Mammary epithelial cell (primary cell): ENCODE measurements at regions of chr12 and their contacts with region 1.

Region 1: GRCh38 chr12:56189176-56189917 is at the start of gene SMARCC2:
- DNase-seq: peak; percentile 75
- H3K4me3 ChIP-seq: peak within 1 kb of the TSS; percentile 69 to 88 (median 71)
- H3K27ac ChIP-seq: peak within 1 kb of the TSS; percentile 56
- H3K4me1 ChIP-seq: peaks cover 18% of the 10 kb centered on the region
- H3K27me3 ChIP-seq: no peaks in the 10 kb centered on the region
- CTCF ChIP-seq: peak; percentile 52 to 71
- total RNA-seq, gene SMARCC2: 28.7 to 61.6 TPM

Region 2: DNA sequence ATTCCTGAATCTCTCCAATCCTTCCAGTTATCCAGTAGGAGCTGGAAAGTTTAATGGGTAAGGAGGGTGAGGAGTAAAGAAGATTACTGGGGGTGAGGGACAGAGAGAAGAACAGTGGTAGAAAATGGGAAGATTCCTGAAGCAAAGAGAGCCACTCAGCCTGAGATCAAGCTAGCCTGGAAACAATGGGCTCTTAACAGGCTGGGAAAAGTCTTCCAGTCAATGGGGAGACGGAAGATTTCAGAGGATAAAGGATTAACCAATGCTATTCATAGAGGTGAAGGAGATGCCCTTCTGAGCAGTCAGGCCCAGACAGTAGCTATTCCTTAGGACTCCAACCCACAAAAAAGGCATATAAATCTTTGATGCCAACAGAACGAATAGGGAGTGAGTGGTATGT is 431.6 kb before region 1 on chr12:
- CTCF ChIA-PET with region 1: no interaction called
- dilution Hi-C with region 1: loop called (anchors 5 kb)
- in situ Hi-C with region 1: no loop called
- intact Hi-C with region 1: no loop called
- DNase-seq: no peak
- H3K4me3 ChIP-seq: no peak overlapping the region
- H3K27ac ChIP-seq: no peak overlapping the region
- H3K4me1 ChIP-seq: no peaks in the 10 kb centered on the region
- H3K27me3 ChIP-seq: no peaks in the 10 kb centered on the region
- CTCF ChIP-seq: no peak

Region 3: DNA sequence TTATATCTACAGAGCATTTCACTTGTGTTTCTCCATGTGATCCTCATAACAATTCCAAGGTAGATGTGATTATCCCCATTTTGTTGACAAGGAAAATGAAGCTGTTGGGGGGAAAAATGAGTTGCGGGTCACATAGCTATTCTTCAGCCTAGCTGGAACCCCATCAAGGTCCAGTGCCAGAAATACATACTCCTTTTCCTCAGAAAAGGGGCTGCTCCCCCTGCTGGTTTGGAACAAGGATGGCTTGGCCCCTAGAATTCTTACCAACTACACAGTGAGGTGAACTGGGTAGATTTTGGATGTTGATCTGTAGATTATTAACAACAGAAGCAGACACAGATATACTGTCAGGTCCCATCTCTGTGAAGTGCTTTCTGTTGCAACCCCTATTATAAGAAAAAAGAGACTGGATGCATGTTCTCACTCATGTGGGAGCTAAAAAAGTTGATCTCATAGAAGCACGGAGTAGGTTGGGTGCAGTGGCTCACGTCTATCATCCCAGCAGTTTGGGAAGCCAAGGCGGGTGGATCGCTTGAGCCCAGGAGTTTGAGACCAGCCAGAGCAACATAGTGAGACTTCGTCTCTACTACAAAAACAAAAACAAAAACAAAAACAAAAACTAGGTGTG is 159.6 kb before region 1 on chr12:
- CTCF ChIA-PET with region 1: no interaction called
- dilution Hi-C with region 1: no loop called
- in situ Hi-C with region 1: no loop called
- intact Hi-C with region 1: no loop called
- DNase-seq: no peak
- H3K4me3 ChIP-seq: no peak overlapping the region
- H3K27ac ChIP-seq: no peak overlapping the region
- H3K4me1 ChIP-seq: peaks cover 13% of the 10 kb centered on the region
- H3K27me3 ChIP-seq: no peaks in the 10 kb centered on the region
- CTCF ChIP-seq: peak; percentile 76 to 87

Region 4: DNA sequence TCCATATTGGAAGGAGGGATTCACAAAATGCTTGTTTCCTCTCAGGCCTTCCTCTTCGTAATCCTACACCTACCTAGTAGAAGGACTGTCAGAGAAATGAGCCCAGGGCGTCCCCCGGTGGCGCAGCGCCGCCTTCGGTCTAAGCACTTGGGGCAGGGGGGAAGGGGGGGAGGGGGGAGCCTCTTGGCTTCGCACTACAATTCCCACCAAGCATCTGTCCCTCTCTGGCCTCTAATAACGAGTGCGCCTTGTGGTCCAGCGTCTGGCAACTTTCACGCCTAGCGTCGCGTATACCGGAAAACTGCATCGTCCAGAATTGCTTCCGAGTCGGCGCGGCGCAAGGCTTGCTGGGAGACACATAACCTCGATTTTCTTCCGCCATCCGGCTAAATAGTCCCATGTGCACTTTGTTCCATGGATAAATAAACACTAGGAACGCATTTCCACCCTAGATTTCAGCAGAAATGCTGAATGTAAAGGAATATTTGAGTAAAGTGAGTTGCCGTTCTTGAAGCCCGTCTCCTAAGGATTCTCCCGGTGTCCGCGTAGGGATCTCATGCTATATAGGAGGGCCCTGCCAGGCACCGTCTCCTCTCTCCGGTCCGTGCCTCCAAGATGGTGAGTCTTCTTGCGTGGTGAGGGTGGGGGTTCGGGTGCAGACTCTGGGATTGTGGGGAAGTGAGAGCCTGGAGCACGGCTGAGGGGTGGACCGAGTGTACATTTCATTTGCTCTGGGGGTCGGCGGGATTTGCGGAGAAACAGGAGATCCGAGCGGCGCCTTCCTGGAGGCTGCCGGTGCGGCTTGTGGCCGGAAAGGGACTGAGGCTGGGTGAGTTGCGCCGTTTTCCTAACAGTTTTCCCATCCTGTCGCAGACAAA is 147.6 kb before region 1 on chr12 and contains the start of gene RPS26:
- CTCF ChIA-PET with region 1: no interaction called
- dilution Hi-C with region 1: no loop called
- in situ Hi-C with region 1: no loop called
- intact Hi-C with region 1: loop called (anchors 2 kb)
- DNase-seq: peak; percentile 99
- H3K4me3 ChIP-seq: peak within 1 kb of the TSS; percentile 78 to 91 (median 86)
- H3K27ac ChIP-seq: peak within 1 kb of the TSS; percentile 91
- H3K4me1 ChIP-seq: peaks cover 19% of the 10 kb centered on the region
- H3K27me3 ChIP-seq: no peaks in the 10 kb centered on the region
- CTCF ChIP-seq: peak; percentile 16 to 54
- total RNA-seq, gene RPS26: 46.4 to 331 TPM

Region 5: GRCh38 chr12:56127888-56128669 is 61.3 kb before region 1 on chr12 and contains the start of gene ESYT1:
- CTCF ChIA-PET with region 1: interaction called, 6 read pairs
- dilution Hi-C with region 1: no loop called
- in situ Hi-C with region 1: no loop called
- intact Hi-C with region 1: loop called (anchors 1 kb)
- DNase-seq: peak; percentile 100
- H3K4me3 ChIP-seq: peak within 1 kb of the TSS; percentile 74 to 86 (median 81)
- H3K27ac ChIP-seq: peak within 1 kb of the TSS; percentile 82
- H3K4me1 ChIP-seq: peaks cover 18% of the 10 kb centered on the region
- H3K27me3 ChIP-seq: no peaks in the 10 kb centered on the region
- CTCF ChIP-seq: no peak
- total RNA-seq, gene ESYT1: 166 to 366 TPM

Region 6: DNA sequence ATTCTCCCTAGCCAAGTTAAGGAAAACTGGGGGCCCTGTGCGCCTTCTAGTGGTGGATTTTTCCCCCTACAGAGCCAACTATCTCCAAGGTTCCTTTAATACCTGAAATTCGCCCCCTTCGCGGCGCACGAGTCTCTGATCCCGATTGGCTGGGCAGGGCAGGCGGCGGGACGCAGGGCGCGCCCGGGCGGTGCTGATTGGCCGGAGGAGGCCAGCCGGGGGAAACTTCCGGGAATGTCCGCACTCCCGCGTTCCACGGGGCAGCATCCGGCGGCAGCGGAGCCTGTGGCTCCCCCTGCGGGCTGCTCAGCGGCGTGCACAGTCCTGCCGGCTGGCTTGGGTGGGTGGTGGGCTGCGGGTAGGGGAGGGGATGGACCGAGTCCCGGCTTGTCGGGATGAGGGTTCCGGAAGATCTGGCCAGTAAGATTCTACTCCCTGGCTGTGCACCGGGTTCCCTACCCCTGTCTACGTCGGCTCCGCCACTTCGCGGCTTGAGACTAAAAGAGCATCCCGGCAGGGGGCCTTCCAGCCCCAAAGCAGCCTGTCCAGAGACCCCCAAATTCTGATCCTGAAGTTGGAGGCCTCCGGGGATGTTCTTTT is 34.9 kb after region 1 on chr12 and contains the start of gene NABP2:
- CTCF ChIA-PET with region 1: interaction called, 9 read pairs
- dilution Hi-C with region 1: no loop called
- in situ Hi-C with region 1: no loop called
- intact Hi-C with region 1: loop called (anchors 1 kb)
- DNase-seq: peak; percentile 98
- H3K4me3 ChIP-seq: peak within 1 kb of the TSS; percentile 69 to 72 (median 70)
- H3K27ac ChIP-seq: peak within 1 kb of the TSS; percentile 30
- H3K4me1 ChIP-seq: peaks cover 21% of the 10 kb centered on the region
- H3K27me3 ChIP-seq: no peaks in the 10 kb centered on the region
- CTCF ChIP-seq: peak; percentile 65 to 82
- total RNA-seq, gene NABP2: 18.3 to 37.5 TPM

Region 7: GRCh38 chr12:56258057-56258819 is 68.9 kb after region 1 on chr12 and contains the start of gene ANKRD52:
- CTCF ChIA-PET with region 1: no interaction called
- dilution Hi-C with region 1: no loop called
- in situ Hi-C with region 1: no loop called
- intact Hi-C with region 1: loop called (anchors 1 kb)
- DNase-seq: peak; percentile 72
- H3K4me3 ChIP-seq: peak within 1 kb of the TSS; percentile 64 to 80 (median 79)
- H3K27ac ChIP-seq: peak within 1 kb of the TSS; percentile 43
- H3K4me1 ChIP-seq: peaks cover 35% of the 10 kb centered on the region
- H3K27me3 ChIP-seq: no peaks in the 10 kb centered on the region
- CTCF ChIP-seq: peak; percentile 33 to 54
- total RNA-seq, gene ANKRD52: 22.8 to 45.2 TPM

Region 8: GRCh38 chr12:56490360-56490759 is 301.0 kb after region 1 on chr12:
- CTCF ChIA-PET with region 1: no interaction called
- dilution Hi-C with region 1: no loop called
- in situ Hi-C with region 1: no loop called
- intact Hi-C with region 1: loop called (anchors 5 kb)
- DNase-seq: no peak
- H3K4me3 ChIP-seq: no peak overlapping the region
- H3K27ac ChIP-seq: no peak overlapping the region
- H3K4me1 ChIP-seq: peaks cover 16% of the 10 kb centered on the region
- H3K27me3 ChIP-seq: no peaks in the 10 kb centered on the region
- CTCF ChIP-seq: no peak